Astrocyte of the cerebellum (primary cell): ENCODE measurements at regions of chr7 and their contacts with region 1.

Region 1: GRCh38 chr7:129948877-129949291 is 3.9 kb downstream of the UBE2H start:
- DNase-seq: peak; percentile 84
- H3K4me3 ChIP-seq: peak overlapping the region; percentile 93
- CTCF ChIP-seq: no peak

Region 2: DNA sequence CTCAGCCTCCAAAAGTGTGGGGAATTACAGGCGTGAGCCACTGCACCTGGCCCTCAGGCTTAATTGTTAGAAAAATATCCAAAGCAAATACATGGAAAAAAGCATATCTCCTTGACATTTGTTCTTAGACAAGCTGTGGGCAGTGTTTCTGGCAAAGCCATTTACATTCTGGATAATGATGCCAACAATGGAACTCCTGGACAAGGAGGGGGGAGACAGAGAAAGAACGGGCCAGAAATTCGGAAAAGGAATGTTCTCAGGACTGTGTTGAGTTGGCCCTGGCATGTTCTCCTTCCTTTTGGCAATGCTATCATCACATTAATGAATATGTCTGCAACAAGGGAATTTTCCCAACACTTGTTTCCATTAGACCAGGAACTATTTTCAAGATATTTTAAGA is 84.8 kb before region 1 on chr7:
- in situ Hi-C with region 1: loop called (anchors 5 kb)
- DNase-seq: no peak
- H3K4me3 ChIP-seq: no peak overlapping the region
- CTCF ChIP-seq: no peak